Activated B cell treated with CpG ODN at 0.5 μM for 24 hours (primary cell): ENCODE measurements at regions of chrX and their contacts with region 1.

Region 1: DNA sequence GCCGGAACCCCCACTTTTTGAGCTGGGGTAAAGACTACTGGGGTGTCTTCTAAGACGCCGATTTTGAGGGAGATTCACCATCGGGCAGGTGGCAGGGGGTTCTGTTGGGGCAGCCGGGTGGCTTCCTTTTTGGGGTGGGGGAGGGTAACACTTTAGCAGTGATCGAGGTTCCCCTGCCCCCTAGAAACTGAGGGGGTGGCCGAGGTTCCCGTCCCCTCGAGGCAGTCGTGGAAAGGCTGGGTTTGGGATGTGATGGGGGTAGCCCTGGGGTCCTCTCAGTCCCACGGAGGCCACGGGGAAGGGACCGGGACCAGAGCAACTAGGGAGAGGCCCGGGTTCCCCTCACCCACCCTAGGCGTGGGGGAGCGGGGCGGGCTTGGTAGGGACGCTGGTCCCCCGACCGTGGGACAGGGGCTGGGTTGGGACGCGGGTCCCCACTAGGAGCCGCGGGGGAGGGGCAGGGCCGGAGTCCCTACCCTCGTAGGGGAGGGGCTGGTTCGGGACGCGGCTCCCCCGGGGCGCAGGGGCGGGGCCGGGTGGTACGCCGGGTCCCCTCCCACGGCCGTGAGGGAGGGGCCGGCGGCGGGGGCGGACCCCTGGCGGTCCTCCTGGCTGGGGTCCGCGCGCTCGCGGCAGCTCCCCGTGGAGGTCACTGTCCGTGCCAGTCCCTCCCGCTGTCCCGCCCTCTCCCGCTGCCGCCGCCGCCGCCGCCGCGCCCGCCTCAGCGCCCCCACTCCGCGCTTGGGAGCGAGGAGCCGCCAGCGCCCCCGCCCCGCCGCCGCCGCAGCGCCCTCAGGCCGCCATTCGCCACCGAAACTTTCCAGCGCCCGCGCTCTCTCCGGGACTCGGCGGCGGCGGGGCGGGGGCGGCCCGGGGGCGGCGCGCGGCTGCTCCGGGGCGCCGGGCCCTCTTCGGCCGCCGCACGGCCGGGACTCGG is at the start of gene TBL1X:
- DNase-seq: peak; percentile 66
- ATAC-seq: peak; percentile 70
- H3K4me3 Mint-ChIP-seq: peak within 1 kb of the TSS; percentile 78
- H3K27ac Mint-ChIP-seq: peak within 1 kb of the TSS; percentile 86
- H3K4me1 Mint-ChIP-seq: peaks cover 48% of the 10 kb centered on the region
- H3K27me3 Mint-ChIP-seq: no peaks in the 10 kb centered on the region
- CTCF ChIP-seq: no peak
- total RNA-seq, gene TBL1X: 37.6 and 38.5 TPM in 2 replicates

Region 2: DNA sequence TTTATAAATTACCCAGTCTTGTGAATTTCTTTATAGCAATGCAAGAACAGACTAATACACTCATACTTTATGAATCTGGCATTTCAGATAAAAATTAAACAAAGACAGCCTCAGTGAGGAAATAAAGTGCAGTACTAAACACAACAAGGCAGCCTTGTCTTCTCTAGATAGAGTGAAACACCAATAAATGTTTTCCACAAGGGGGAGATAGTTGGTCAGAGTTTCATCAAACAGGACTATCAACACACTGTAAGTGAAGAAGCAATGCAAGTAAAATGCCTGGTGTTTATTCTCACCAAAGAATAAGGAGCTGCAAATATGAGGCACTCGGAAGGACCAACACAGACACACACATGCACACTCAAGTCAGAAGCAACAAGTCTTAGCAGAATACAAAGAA is 493.6 kb before region 1 on chrX:
- CTCF ChIA-PET with region 1: interaction called, 5 read pairs
- POLR2A ChIA-PET with region 1: no interaction called
- intact Hi-C with region 1: loop called (anchors 1 kb)
- DNase-seq: no peak
- ATAC-seq: peak; percentile 54
- H3K4me3 Mint-ChIP-seq: no peak overlapping the region
- H3K27ac Mint-ChIP-seq: no peak overlapping the region
- H3K4me1 Mint-ChIP-seq: no peaks in the 10 kb centered on the region
- H3K27me3 Mint-ChIP-seq: peaks cover under 1% of the 10 kb centered on the region
- CTCF ChIP-seq: no peak

Region 3: GRCh38 chrX:9122519-9123245 is 342.0 kb before region 1 on chrX:
- CTCF ChIA-PET with region 1: no interaction called
- POLR2A ChIA-PET with region 1: no interaction called
- intact Hi-C with region 1: no loop called
- DNase-seq: no peak
- ATAC-seq: no peak
- H3K4me3 Mint-ChIP-seq: no peak overlapping the region
- H3K27ac Mint-ChIP-seq: no peak overlapping the region
- H3K4me1 Mint-ChIP-seq: no peaks in the 10 kb centered on the region
- H3K27me3 Mint-ChIP-seq: peaks cover 2% of the 10 kb centered on the region
- CTCF ChIP-seq: no peak

Region 4: DNA sequence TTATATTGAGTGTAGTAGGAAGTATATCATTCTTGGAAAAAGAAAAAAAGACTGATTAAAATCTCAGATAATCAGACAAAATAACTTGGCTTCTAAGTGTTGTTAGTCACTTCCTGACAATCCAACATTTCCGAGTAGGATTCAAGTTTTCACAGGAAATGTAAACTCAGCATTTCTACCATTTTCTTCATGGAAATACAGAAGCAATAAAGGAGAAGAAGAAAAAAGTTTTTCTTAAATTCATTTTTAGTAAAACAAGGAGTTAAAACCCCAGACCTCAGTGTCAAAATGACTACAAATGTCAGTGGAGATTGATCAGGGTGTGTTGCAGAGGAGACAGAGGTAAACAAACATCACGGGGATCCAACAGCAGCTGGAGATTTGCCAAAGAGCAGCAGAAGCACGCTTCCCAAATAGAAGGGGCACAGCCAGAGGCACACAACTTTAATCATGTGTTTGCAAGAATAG is 301.5 kb before region 1 on chrX:
- CTCF ChIA-PET with region 1: no interaction called
- POLR2A ChIA-PET with region 1: interaction called, 8 read pairs
- intact Hi-C with region 1: loop called (anchors 1 kb)
- DNase-seq: no peak
- ATAC-seq: no peak
- H3K4me3 Mint-ChIP-seq: no peak overlapping the region
- H3K27ac Mint-ChIP-seq: no peak overlapping the region
- H3K4me1 Mint-ChIP-seq: peaks cover 28% of the 10 kb centered on the region
- H3K27me3 Mint-ChIP-seq: peaks cover 8% of the 10 kb centered on the region
- CTCF ChIP-seq: no peak

Region 5: GRCh38 chrX:9302381-9302780 is 162.3 kb before region 1 on chrX:
- CTCF ChIA-PET with region 1: no interaction called
- POLR2A ChIA-PET with region 1: no interaction called
- intact Hi-C with region 1: no loop called
- DNase-seq: no peak
- ATAC-seq: no peak
- H3K4me3 Mint-ChIP-seq: no peak overlapping the region
- H3K27ac Mint-ChIP-seq: no peak overlapping the region
- H3K4me1 Mint-ChIP-seq: no peaks in the 10 kb centered on the region
- H3K27me3 Mint-ChIP-seq: peaks cover 2% of the 10 kb centered on the region
- CTCF ChIP-seq: no peak

Region 6: GRCh38 chrX:9501362-9501761 is 36.7 kb after region 1 on chrX:
- CTCF ChIA-PET with region 1: no interaction called
- POLR2A ChIA-PET with region 1: no interaction called
- intact Hi-C with region 1: loop called (anchors 1 kb)
- DNase-seq: no peak
- ATAC-seq: no peak
- H3K4me3 Mint-ChIP-seq: no peak overlapping the region
- H3K27ac Mint-ChIP-seq: no peak overlapping the region
- H3K4me1 Mint-ChIP-seq: peaks cover 16% of the 10 kb centered on the region
- H3K27me3 Mint-ChIP-seq: no peaks in the 10 kb centered on the region
- CTCF ChIP-seq: no peak

Region 7: DNA sequence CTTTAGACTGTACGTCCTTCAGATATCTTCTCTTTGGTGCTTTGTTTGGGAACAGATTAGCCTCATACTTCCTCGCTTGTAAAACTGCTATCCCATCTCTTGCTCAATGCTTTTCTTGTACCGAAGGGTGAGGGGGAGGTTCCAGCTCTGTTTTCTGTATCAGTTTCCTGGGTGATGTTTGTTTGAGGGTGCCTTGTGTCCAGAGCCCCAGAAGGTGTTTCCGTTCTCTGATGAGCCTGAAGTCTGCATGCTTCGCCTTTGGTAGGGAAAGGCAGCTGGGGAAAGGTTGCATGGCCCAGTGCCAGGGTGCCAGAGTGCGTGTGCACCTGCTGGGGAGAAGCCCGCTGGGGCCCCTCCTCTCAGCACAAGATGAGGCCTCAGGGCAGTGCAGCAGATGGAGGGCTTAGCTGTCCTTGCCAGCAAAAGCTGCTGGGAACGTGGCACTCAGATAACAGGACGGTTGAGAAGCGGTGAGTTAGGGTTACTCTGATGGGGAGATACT is 73.9 kb after region 1 on chrX:
- CTCF ChIA-PET with region 1: no interaction called
- POLR2A ChIA-PET with region 1: no interaction called
- intact Hi-C with region 1: no loop called
- DNase-seq: no peak
- ATAC-seq: no peak
- H3K4me3 Mint-ChIP-seq: no peak overlapping the region
- H3K27ac Mint-ChIP-seq: no peak overlapping the region
- H3K4me1 Mint-ChIP-seq: peaks cover 39% of the 10 kb centered on the region
- H3K27me3 Mint-ChIP-seq: no peaks in the 10 kb centered on the region
- CTCF ChIP-seq: no peak

Region 8: DNA sequence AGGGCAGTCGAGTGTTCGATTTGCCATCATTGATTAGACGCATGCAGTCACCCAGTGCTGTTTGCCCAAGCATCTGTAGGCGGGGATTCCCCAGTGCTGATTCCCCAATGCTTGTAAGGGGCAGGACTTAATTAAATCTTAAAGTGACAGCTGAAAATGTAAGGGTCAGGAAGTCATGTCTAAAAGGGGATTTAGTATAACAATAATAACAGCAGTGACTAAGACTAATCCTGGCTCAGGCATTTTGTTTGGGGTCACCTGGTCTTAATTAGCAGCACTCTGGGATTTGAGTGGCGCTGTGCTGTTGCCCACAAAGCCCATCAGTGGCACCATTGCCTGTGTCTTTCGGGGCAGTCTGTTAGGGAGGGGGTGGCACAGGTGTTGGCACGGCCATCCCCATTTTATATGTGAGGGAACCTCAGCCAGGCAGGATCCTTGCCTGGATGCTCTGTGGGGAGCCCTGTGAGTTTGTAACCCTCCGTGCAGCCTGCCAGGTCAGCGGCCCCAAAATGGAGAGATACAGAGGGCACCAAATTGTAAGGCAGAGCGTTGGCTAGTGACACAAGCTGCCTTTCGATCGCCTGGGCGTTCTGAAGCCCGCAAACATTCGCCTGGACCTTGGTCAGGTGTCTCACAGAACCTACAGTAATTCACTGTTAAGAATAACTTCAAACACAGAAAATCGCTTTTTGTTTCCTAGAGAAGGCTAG is 146.9 kb after region 1 on chrX:
- CTCF ChIA-PET with region 1: no interaction called
- POLR2A ChIA-PET with region 1: no interaction called
- intact Hi-C with region 1: loop called (anchors 5 kb)
- DNase-seq: no peak
- ATAC-seq: peak; percentile 50
- H3K4me3 Mint-ChIP-seq: no peak overlapping the region
- H3K27ac Mint-ChIP-seq: no peak overlapping the region
- H3K4me1 Mint-ChIP-seq: peaks cover 24% of the 10 kb centered on the region
- H3K27me3 Mint-ChIP-seq: no peaks in the 10 kb centered on the region
- CTCF ChIP-seq: no peak

Region 9: GRCh38 chrX:9708904-9709553 is 244.3 kb after region 1 on chrX:
- CTCF ChIA-PET with region 1: no interaction called
- POLR2A ChIA-PET with region 1: no interaction called
- intact Hi-C with region 1: loop called (anchors 1 kb)
- DNase-seq: peak; percentile 67
- ATAC-seq: peak; percentile 85
- H3K4me3 Mint-ChIP-seq: no peak overlapping the region
- H3K27ac Mint-ChIP-seq: no peak overlapping the region
- H3K4me1 Mint-ChIP-seq: peaks cover 12% of the 10 kb centered on the region
- H3K27me3 Mint-ChIP-seq: no peaks in the 10 kb centered on the region
- CTCF ChIP-seq: no peak